ENCODE measurements at regions of chr17 and their contacts with region 1.

Region 1: DNA sequence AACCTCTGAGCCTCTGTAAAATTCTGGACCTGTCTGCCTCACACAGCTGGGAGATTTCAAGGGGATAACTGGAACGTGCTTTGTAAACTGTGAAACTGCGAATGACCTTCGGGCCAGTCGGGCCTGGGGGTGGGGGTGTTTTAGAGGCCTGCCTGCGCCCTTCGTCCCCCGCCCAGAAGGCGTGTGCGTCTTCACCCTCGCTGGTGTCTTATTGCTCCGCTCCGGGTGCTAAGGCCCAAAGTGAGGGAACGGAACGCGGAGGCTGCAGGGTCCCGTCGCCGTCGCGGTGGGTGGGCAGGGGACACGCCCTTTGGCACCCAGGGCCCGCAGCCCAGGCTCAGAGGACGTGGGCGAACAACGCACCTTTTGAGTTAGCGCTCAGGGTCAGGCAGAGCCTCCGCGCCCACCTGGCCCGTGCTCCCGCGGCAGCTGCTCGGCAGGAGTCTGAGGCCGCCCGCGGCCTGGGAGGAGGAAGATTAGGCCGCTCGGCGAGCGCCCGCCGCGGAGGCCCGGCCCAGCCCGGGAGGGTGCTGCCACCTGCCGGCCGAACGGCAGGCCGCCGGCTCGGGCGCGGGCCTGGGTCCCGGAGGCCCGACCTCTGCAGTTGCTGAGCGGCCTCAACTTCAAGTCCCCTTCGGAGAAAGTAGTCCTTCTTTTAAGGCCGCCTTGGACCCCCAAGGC is 29.7 kb downstream of the DCAKD start:
- DNase-seq: peak; percentile 38
- H3K4me3 ChIP-seq: peak overlapping the region in 1 of 3 experiments; percentile 30
- H3K27ac ChIP-seq: no peak overlapping the region
- H3K4me1 ChIP-seq: peaks cover 17% of the 10 kb centered on the region
- H3K27me3 ChIP-seq: no peaks in the 10 kb centered on the region
- CTCF ChIP-seq: peak; percentile 76 to 98
- POLR2A ChIP-seq: no peak

Region 2: DNA sequence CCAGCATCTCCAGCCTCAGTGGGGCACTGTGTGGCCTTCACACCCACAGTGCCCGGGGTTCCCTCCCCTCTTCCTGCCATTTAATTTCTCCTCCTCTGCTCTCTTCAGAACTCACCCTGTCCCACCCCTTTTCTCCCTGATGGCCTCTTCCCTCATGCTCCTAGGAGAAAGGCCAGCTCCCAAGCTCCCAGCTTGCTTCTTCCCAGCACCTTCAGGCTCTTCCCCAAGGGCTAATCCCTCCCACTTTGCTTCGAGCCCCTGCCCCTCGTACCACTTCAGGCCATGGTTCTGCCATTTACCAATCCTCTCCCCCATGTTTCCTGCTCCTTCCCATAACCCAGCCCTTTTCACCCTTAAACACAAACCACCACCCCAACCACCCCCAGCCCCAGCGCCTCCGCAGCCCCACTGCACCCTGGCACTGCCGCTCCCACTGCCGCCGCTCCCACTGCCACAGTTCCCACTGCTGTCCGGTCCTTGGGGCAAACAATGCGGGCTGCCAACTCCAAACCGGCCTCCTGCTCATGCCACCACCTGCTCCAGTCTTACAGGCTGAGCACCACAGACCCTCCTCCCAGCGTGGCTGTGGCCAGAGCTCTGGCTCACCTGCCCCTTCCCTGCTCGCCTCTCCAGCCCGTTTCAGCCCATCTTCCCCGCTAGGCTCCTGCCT is 234.3 kb before region 1 on chr17:
- CTCF ChIA-PET with region 1: no interaction called
- POLR2A ChIA-PET with region 1: no interaction called
- dilution Hi-C with region 1: no loop called
- intact Hi-C with region 1: no loop called
- DNase-seq: no peak
- H3K4me3 ChIP-seq: no peak overlapping the region
- H3K27ac ChIP-seq: no peak overlapping the region
- H3K4me1 ChIP-seq: no peaks in the 10 kb centered on the region
- H3K27me3 ChIP-seq: no peaks in the 10 kb centered on the region
- CTCF ChIP-seq: no peak
- POLR2A ChIP-seq: no peak

Region 3: DNA sequence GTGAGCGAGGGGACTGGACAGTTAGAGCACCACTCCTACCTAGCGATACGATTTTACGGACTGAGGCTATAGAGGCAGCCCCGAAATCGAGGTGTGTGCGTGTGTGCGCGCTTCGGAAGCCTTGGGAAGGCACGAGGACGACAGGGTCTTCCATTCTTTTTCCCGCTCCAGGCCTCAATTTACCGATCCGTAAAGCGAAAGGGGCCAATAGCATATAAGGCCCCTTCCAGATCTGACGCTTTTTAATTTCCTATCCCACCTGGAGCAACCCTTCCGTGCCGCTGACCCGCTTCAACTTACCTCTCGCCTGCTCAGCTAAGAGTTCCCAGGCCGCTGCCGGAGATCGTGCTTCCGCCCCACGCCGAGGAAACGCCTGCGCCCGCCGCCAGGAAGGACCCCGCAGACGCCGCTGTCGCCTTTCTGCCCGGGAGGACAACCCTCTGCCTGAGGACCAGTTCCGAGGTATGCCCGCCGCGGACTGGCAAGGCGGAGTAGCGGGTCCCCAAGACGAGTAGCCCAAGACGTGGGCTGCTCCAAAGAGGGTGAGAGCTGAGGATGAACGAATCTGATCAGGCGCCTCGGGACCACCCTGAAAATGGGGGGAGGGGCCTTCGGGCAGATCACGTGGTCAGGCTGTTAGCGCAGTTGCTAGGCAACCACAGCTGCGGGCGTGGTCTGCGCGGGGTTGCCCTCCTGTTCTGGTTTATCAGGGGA is 122.5 kb before region 1 on chr17 and contains the start of gene EFTUD2:
- CTCF ChIA-PET with region 1: interaction called, 33 read pairs
- POLR2A ChIA-PET with region 1: interaction called, 3 read pairs
- dilution Hi-C with region 1: no loop called
- intact Hi-C with region 1: no loop called
- DNase-seq: peak; percentile 93
- H3K4me3 ChIP-seq: peak within 1 kb of the TSS; percentile 67 to 97 (median 73)
- H3K27ac ChIP-seq: peak within 1 kb of the TSS; percentile 96
- H3K4me1 ChIP-seq: peaks cover 37% of the 10 kb centered on the region
- H3K27me3 ChIP-seq: no peaks in the 10 kb centered on the region
- CTCF ChIP-seq: no peak
- POLR2A ChIP-seq: peak; percentile 87
- total RNA-seq, gene EFTUD2: 170 and 171 TPM in 2 replicates

Region 4: GRCh38 chr17:44947461-44948314 is 74.1 kb before region 1 on chr17 and contains the start of gene KIF18B:
- CTCF ChIA-PET with region 1: interaction called, 4 read pairs
- POLR2A ChIA-PET with region 1: no interaction called
- dilution Hi-C with region 1: no loop called
- intact Hi-C with region 1: loop called (anchors 2 kb)
- DNase-seq: peak; percentile 92
- H3K4me3 ChIP-seq: peak within 1 kb of the TSS; percentile 30 to 90 (median 63)
- H3K27ac ChIP-seq: peak within 1 kb of the TSS; percentile 59
- H3K4me1 ChIP-seq: peaks cover 11% of the 10 kb centered on the region
- H3K27me3 ChIP-seq: no peaks in the 10 kb centered on the region
- CTCF ChIP-seq: no peak
- POLR2A ChIP-seq: peak; percentile 97
- total RNA-seq, gene KIF18B: 48.4 and 50.3 TPM in 2 replicates

Region 5: DNA sequence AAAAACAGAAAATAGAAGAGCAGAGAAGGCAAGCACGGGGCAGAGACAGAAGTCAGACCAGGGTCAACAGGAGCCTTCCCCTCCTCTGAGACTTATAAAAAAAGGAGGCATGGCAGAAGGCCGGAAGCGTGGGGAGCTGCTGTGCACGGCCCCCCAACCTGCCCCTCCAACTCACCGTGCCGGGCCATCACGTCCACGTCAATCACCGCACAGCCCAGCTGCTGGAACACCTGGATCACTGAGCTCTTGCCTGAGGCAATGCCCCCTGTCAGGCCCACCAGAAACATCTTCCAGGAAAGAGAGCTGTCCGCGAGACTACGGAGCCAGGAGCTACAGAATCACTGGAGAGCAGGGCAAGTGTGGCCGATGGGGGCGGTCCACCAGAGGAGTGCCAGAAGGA is 12.9 kb after region 1 on chr17:
- CTCF ChIA-PET with region 1: interaction called, 15 read pairs
- POLR2A ChIA-PET with region 1: no interaction called
- dilution Hi-C with region 1: no loop called
- intact Hi-C with region 1: no loop called
- DNase-seq: no peak
- H3K4me3 ChIP-seq: no peak overlapping the region
- H3K27ac ChIP-seq: no peak overlapping the region
- H3K4me1 ChIP-seq: peaks cover 5% of the 10 kb centered on the region
- H3K27me3 ChIP-seq: no peaks in the 10 kb centered on the region
- CTCF ChIP-seq: no peak
- POLR2A ChIP-seq: no peak